ENCODE measurements at regions of chrX and their contacts with region 1.

Region 1: DNA sequence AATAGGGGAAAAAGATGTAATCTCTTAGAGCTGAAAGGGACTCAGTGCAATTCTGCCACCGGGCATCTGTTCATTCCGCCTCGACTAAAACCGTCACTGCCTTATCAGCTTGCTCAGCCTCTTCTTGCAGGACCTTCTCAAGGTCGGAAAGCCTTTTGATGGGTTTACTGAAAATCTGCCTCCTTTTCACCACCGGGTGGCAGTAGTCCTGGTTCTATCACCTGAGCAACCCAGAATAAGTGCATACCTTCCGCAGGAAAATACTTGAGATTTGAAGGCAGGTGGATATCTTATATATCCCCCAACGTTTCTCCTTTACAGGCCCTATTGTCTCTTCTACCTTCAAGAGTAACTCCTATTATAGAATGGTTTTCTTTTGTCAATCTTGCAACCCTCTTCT is 103.4 kb upstream of the PAK3 start:
- DNase-seq: peak; percentile 51
- H3K4me3 Mint-ChIP-seq: no peak overlapping the region
- H3K27ac Mint-ChIP-seq: no peak overlapping the region
- H3K4me1 Mint-ChIP-seq: no peaks in the 10 kb centered on the region
- H3K27me3 Mint-ChIP-seq: peaks cover 67% of the 10 kb centered on the region
- CTCF ChIP-seq: peak; percentile 34

Region 2: GRCh38 chrX:110442640-110443039 is 550.0 kb before region 1 on chrX:
- CTCF ChIA-PET with region 1: no interaction called
- POLR2A ChIA-PET with region 1: no interaction called
- intact Hi-C with region 1: loop called (anchors 10 kb)
- DNase-seq: peak; percentile 62
- H3K4me3 Mint-ChIP-seq: no peak overlapping the region
- H3K27ac Mint-ChIP-seq: no peak overlapping the region
- H3K4me1 Mint-ChIP-seq: no peaks in the 10 kb centered on the region
- H3K27me3 Mint-ChIP-seq: peaks cover 94% of the 10 kb centered on the region
- CTCF ChIP-seq: peak; percentile 26

Region 3: GRCh38 chrX:110699109-110699508 is 293.5 kb before region 1 on chrX:
- CTCF ChIA-PET with region 1: no interaction called
- POLR2A ChIA-PET with region 1: no interaction called
- intact Hi-C with region 1: no loop called
- DNase-seq: peak; percentile 5
- H3K4me3 Mint-ChIP-seq: no peak overlapping the region
- H3K27ac Mint-ChIP-seq: no peak overlapping the region
- H3K4me1 Mint-ChIP-seq: no peaks in the 10 kb centered on the region
- H3K27me3 Mint-ChIP-seq: peaks cover 64% of the 10 kb centered on the region
- CTCF ChIP-seq: no peak